ENCODE measurements at regions of chr7 and their contacts with region 1.

Region 1: DNA sequence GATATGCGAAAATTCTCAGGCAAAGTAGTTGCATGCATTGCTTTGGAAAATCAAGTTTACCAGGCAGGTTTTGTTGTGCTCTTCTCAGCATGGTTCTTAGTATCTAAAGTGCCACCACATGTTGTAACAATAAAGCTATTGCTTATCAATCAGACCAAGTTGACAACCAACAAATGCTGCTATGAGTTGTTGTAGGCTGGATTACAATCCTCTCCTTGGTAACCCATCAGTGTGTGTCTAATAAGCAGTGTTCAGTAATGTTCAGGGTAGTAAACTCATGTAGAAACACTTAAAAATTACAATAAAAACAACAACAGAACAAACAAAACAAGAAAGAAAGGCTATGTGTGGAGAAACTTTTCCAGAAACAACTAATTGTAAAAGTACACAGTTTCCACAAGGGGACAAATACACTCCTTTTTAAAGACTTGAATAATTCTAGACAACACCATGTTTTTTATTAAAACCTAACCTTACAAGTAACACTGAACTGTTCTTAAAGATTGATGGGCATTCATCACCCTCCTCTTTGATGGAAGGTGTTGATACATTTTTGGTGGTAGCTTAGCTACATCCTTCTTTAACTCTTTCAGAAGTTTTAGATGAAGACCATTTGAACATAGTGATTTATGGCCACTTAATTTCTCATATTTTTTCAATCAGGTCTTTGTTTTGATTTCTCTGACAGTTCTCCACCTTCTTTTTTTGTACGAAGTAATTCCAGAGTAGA is 370.9 kb upstream of the SEMA3A start:
- DNase-seq: no peak
- ATAC-seq: no peak
- H3K4me3 ChIP-seq: no peak overlapping the region
- H3K27ac ChIP-seq: no peak overlapping the region; the same call in 1 of the 2 replicates
- H3K4me1 ChIP-seq: no peaks in the 10 kb centered on the region
- H3K27me3 ChIP-seq: no peaks in the 10 kb centered on the region
- CTCF ChIP-seq: no peak

Region 2: GRCh38 chr7:84364708-84365107 is 200.8 kb before region 1 on chr7:
- CTCF ChIA-PET with region 1: no interaction called
- POLR2A ChIA-PET with region 1: no interaction called
- in situ Hi-C with region 1: no loop called
- intact Hi-C with region 1: no loop called
- DNase-seq: no peak
- ATAC-seq: peak; percentile 48; the same call in 1 of the 2 replicates
- H3K4me3 ChIP-seq: no peak overlapping the region
- H3K27ac ChIP-seq: no peak overlapping the region
- H3K4me1 ChIP-seq: peaks cover 6% of the 10 kb centered on the region; the same call in 1 of the 2 replicates
- H3K27me3 ChIP-seq: no peaks in the 10 kb centered on the region
- CTCF ChIP-seq: no peak

Region 3: DNA sequence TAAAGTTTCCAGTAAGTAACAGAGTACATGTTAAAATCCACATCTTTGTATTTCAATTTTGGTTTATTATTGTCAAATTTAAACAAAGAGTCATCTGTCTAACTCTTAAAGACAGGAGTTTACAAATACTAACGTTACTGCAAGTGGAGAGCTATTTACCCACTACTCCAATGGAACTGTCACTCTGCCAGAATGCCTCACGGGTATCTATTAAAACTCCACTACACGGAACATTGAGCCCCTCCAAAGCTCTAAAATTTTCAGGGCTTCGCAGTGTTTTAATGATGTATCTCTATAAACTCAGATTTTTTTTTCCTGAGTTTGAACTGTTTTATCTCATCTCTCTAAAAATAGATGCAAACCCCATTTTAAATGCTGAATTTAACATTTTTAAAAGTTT is 17.8 kb after region 1 on chr7:
- CTCF ChIA-PET with region 1: no interaction called
- POLR2A ChIA-PET with region 1: no interaction called
- in situ Hi-C with region 1: no loop called
- intact Hi-C with region 1: loop called (anchors 1 kb)
- DNase-seq: no peak
- ATAC-seq: no peak
- H3K4me3 ChIP-seq: no peak overlapping the region
- H3K27ac ChIP-seq: no peak overlapping the region
- H3K4me1 ChIP-seq: no peaks in the 10 kb centered on the region
- H3K27me3 ChIP-seq: no peaks in the 10 kb centered on the region
- CTCF ChIP-seq: no peak